Endothelial cell of umbilical vein (primary cell): ENCODE measurements at regions of chr7 and their contacts with region 1.

Region 1: DNA sequence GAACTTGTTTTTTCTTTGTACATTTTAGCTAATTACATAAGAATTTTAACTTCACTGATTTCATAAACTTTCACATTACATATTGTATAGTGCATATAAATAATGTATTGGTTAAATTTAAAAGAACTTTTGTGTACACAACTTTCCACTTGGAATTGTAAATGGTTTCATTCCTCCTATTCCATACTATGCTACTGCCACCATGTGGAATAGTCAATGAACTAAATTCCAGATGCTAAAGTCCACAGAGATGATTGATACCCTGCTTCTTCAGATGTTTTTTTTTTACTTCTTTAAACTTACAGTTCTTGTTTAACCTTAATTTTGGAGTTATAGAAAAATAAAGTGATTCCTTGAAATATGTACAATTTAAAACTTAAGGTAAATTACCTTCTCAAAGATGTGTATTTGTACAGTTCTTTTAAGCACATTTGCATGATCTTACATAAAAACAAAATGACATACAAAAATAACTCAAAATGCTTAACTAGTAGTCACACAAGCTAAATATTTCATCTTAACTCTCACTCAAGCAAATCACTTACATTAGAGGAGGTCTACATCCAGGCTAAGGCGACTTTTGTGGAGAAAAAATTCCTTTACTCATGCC is 247.6 kb upstream of the HGF start:
- DNase-seq: peak; percentile 53
- H3K4me3 ChIP-seq: no peak overlapping the region
- H3K27ac ChIP-seq: no peak overlapping the region
- H3K4me1 ChIP-seq: no peaks in the 10 kb centered on the region
- H3K27me3 ChIP-seq: no peaks in the 10 kb centered on the region
- CTCF ChIP-seq: peak; percentile 20 to 31
- POLR2A ChIP-seq: no peak

Region 2: DNA sequence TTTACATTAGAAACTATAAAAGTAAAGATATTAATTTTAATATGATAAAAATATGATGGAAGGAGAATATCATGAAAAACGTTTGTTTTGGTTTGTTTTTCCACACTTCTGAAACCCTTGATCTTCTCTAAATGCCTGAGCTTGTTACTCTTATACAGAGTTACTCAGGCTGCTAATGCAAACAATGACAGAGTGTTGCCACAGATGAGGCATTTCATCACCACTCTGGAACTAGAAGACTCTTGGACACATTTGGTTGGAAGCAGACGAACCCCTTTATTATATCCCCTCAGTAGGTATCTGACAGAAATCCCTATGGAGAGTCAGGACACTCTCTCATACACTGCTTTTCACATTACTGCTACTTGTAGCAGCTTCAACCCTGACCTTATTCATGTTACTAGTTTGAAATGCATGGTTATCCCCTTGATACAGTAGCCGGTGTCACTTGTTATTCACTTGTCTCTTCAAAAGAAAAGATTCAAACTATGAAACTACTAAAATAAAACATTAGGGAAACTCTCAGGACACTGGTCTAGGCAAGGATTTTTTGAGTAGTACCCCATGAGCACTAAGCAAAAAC is 1165.5 kb before region 1 on chr7:
- CTCF ChIA-PET with region 1: no interaction called
- POLR2A ChIA-PET with region 1: no interaction called
- dilution Hi-C with region 1: no loop called
- intact Hi-C with region 1: no loop called
- DNase-seq: no peak
- H3K4me3 ChIP-seq: no peak overlapping the region
- H3K27ac ChIP-seq: no peak overlapping the region
- H3K4me1 ChIP-seq: no peaks in the 10 kb centered on the region
- H3K27me3 ChIP-seq: no peaks in the 10 kb centered on the region
- CTCF ChIP-seq: no peak
- POLR2A ChIP-seq: no peak

Region 3: GRCh38 chr7:81482600-81483186 is 534.7 kb before region 1 on chr7:
- CTCF ChIA-PET with region 1: interaction called, 5 read pairs
- POLR2A ChIA-PET with region 1: no interaction called
- dilution Hi-C with region 1: no loop called
- intact Hi-C with region 1: loop called (anchors 1 kb)
- DNase-seq: peak; percentile 40
- H3K4me3 ChIP-seq: no peak overlapping the region
- H3K27ac ChIP-seq: no peak overlapping the region
- H3K4me1 ChIP-seq: no peaks in the 10 kb centered on the region
- H3K27me3 ChIP-seq: no peaks in the 10 kb centered on the region
- CTCF ChIP-seq: peak; percentile 14 to 27
- POLR2A ChIP-seq: no peak

Region 4: GRCh38 chr7:81715984-81716588 is 301.4 kb before region 1 on chr7:
- CTCF ChIA-PET with region 1: no interaction called
- POLR2A ChIA-PET with region 1: no interaction called
- dilution Hi-C with region 1: no loop called
- intact Hi-C with region 1: loop called (anchors 1 kb)
- DNase-seq: peak; percentile 30
- H3K4me3 ChIP-seq: no peak overlapping the region
- H3K27ac ChIP-seq: no peak overlapping the region
- H3K4me1 ChIP-seq: no peaks in the 10 kb centered on the region
- H3K27me3 ChIP-seq: no peaks in the 10 kb centered on the region
- CTCF ChIP-seq: peak; percentile 13 to 26
- POLR2A ChIP-seq: no peak

Region 5: DNA sequence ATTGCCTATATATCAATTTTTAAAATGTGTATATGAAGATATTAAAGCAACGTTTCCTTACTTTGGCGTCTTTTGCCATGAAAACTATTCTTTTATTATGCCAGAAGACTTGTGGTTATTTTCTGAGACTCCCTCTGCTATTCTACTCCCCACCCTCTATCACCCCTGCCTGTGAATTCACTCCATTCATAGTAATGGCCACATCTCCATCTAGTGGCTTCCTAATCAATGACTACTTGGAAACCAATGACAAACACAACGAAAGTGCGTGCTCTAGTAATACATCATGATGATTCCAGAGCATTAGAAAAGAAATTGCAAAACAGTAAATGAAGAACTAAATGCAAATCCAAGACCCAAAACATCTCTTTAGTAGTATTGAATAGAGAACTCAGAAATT is 60.9 kb before region 1 on chr7:
- CTCF ChIA-PET with region 1: no interaction called
- POLR2A ChIA-PET with region 1: no interaction called
- dilution Hi-C with region 1: no loop called
- intact Hi-C with region 1: loop called (anchors 2 kb)
- DNase-seq: peak; percentile 52
- H3K4me3 ChIP-seq: no peak overlapping the region
- H3K27ac ChIP-seq: no peak overlapping the region
- H3K4me1 ChIP-seq: no peaks in the 10 kb centered on the region
- H3K27me3 ChIP-seq: no peaks in the 10 kb centered on the region
- CTCF ChIP-seq: peak; percentile 9 to 29
- POLR2A ChIP-seq: no peak

Region 6: GRCh38 chr7:82007315-82007714 is 10.1 kb before region 1 on chr7:
- CTCF ChIA-PET with region 1: interaction called, 11 read pairs
- POLR2A ChIA-PET with region 1: no interaction called
- dilution Hi-C with region 1: no loop called
- intact Hi-C with region 1: no loop called
- DNase-seq: peak; percentile 26
- H3K4me3 ChIP-seq: no peak overlapping the region
- H3K27ac ChIP-seq: no peak overlapping the region
- H3K4me1 ChIP-seq: no peaks in the 10 kb centered on the region
- H3K27me3 ChIP-seq: no peaks in the 10 kb centered on the region
- CTCF ChIP-seq: no peak
- POLR2A ChIP-seq: no peak

Region 7: GRCh38 chr7:82284936-82285519 is 267.6 kb after region 1 on chr7:
- CTCF ChIA-PET with region 1: no interaction called
- POLR2A ChIA-PET with region 1: no interaction called
- dilution Hi-C with region 1: no loop called
- intact Hi-C with region 1: no loop called
- DNase-seq: no peak
- H3K4me3 ChIP-seq: no peak overlapping the region
- H3K27ac ChIP-seq: no peak overlapping the region
- H3K4me1 ChIP-seq: peaks cover 5% of the 10 kb centered on the region
- H3K27me3 ChIP-seq: no peaks in the 10 kb centered on the region
- CTCF ChIP-seq: no peak
- POLR2A ChIP-seq: no peak

Region 8: DNA sequence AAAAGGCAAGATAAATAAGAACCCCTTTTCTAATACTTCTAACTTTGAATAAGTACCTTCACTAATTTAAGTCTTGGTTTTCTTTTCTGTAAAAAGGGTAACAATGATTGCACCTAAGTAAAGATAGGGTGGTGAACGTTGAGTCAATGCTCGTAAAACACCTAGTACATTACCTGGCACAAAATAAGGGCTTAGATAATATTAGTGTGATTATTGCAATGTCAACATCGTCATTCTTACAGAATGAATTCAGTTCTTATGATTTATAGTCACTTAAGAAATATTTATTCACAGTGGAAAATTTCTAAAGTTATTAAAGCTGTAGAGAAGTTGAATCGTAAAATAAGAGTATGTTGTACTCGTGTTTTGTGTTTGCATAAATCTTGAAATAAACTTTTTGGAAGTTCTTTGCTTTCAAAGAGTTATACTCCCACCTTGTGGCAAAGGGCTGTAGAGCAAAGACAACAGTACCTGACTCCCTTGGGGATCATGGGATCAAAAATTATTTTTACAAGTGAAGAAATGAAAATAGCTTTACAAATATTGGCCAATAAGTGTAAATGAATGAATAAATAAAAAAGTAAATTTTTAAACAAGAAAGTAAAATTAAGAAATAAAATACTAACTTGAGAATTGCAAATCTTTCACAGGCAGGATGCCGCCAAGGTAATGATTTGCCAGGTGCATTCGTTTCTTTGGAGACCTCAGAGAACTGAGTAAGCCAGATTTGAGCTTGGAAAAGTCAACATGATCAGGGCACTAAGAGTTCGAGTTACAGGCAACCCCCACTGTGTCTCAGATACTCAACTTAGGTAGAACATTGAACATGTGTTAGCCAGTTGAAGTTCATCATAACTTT is 712.0 kb after region 1 on chr7:
- CTCF ChIA-PET with region 1: no interaction called
- POLR2A ChIA-PET with region 1: no interaction called
- dilution Hi-C with region 1: no loop called
- intact Hi-C with region 1: loop called (anchors 5 kb)
- DNase-seq: peak; percentile 60
- H3K4me3 ChIP-seq: no peak overlapping the region
- H3K27ac ChIP-seq: no peak overlapping the region
- H3K4me1 ChIP-seq: no peaks in the 10 kb centered on the region
- H3K27me3 ChIP-seq: no peaks in the 10 kb centered on the region
- CTCF ChIP-seq: peak; percentile 48 to 62
- POLR2A ChIP-seq: no peak